PC-3 (cell line): ENCODE measurements at regions of chr7 and their contacts with region 1.

Region 1: DNA sequence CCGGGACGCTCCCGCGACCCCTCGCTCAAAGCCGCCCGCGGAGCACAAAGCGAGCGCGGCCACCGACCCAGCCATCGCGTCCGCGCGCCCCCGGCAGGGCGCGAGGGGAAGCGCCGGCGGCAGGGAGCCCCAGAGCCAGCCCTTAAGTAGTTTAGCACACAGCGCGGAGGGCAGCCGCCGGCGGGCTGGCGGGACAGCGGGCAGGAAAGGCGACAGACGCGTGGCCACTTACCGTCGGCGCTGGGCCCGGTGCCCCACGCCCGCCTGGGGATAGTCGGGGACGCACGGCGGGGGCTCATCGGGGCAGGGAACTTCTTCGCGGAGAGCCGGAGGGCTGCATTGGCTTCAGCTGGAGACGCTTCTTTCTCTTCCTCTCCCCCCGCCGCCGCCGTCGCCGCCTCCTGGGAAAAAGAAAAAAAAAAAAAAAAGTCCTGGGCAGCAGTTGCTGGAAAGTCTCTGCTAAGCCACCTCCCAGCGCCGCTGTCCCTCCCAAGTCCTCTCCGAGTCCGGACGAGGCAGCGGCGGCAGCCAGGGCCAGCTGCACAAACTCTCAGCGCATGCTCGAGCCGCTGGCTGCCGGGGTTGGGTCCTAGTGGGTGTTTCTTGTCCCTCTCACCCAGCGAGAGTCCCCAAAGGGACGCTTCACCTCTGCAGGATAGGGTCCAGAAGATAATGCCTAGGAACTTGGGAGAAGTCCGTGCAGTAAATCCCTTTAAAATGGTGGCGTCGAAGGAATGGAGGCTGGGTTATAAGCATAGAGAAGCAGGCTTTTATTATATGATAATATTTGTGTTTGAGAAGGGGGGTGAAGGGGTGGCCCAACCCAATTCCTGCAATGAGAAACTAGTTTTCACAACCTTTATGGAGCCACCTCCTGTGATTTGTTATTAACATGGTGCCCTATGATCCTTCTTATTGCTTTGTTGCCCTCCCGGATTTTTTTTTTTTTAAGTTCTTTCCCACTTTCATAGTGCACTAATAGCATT is at the start of gene TSPAN12:
- DNase-seq: peak; percentile 70
- ATAC-seq: peak; percentile 85
- H3K4me3 ChIP-seq: peak within 1 kb of the TSS; percentile 88
- H3K27ac ChIP-seq: peak within 1 kb of the TSS; percentile 48
- H3K4me1 ChIP-seq: peaks cover 8% of the 10 kb centered on the region
- H3K27me3 ChIP-seq: no peaks in the 10 kb centered on the region
- CTCF ChIP-seq: peak; percentile 57
- total RNA-seq, gene TSPAN12: 7.2 and 8.3 TPM in 2 replicates

Region 2: DNA sequence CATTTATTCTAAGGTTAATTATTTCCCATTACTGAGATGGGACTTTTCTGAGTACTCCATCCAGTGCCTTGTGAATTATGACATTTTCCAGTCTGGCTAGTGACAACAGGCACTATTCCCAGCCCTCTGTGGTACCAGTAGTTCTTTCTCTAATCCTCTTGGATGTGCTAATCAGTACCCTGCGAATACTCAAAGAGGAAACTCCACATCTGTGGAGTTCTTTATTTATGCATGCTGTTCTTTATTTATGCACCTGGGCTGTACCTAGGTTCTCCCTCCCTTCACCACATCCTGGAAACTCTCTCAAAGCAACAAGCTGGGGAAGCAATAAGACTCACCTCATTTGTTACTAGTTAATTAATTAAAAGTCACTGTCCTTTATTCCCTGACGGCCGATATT is 83.4 kb before region 1 on chr7:
- CTCF ChIA-PET with region 1: no interaction called
- POLR2A ChIA-PET with region 1: no interaction called
- intact Hi-C with region 1: no loop called
- DNase-seq: no peak
- ATAC-seq: no peak
- H3K4me3 ChIP-seq: no peak overlapping the region
- H3K27ac ChIP-seq: no peak overlapping the region
- H3K4me1 ChIP-seq: no peaks in the 10 kb centered on the region
- H3K27me3 ChIP-seq: no peaks in the 10 kb centered on the region
- CTCF ChIP-seq: no peak

Region 3: DNA sequence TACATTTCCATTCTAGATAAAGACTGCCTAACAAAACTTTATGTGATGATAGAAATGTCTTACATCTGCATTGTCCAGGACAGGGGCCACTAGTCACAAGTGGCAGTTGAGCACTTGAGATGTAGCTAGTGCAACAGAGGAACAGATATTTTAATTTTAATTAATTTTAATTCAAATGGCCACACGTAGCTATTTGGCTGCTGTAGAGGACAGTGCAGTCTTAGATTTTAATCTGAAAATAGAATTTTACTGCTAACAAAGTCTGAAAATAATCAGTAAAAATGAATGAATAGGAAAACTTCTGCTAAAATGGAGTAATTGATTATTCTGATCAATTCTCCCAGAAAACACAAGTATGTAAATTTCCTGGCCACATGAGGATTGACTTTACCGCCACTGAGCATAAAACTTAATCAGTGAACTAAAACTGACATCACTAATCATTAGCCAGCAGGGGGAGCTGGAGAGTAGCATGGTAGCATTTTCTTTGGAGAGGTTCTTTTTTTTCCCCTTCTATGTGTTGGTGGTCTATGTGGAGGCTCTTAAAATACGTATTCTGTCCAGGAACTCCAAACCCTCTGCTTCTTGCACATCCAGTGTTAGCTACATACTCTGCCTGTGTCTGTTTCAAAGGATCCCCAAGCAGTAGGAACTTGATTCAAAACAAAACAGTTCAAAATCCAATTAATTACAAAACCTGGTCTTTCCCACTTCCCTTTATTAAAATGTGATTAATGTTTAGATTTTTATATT is 52.1 kb before region 1 on chr7:
- CTCF ChIA-PET with region 1: no interaction called
- POLR2A ChIA-PET with region 1: no interaction called
- intact Hi-C with region 1: loop called (anchors 1 kb)
- DNase-seq: peak; percentile 72
- ATAC-seq: peak; percentile 61
- H3K4me3 ChIP-seq: no peak overlapping the region
- H3K27ac ChIP-seq: no peak overlapping the region
- H3K4me1 ChIP-seq: no peaks in the 10 kb centered on the region
- H3K27me3 ChIP-seq: no peaks in the 10 kb centered on the region
- CTCF ChIP-seq: peak; percentile 83

Region 4: GRCh38 chr7:120833546-120833945 is 24.3 kb before region 1 on chr7:
- CTCF ChIA-PET with region 1: no interaction called
- POLR2A ChIA-PET with region 1: no interaction called
- intact Hi-C with region 1: loop called (anchors 2 kb)
- DNase-seq: peak; percentile 62
- ATAC-seq: peak; percentile 91
- H3K4me3 ChIP-seq: no peak overlapping the region
- H3K27ac ChIP-seq: no peak overlapping the region
- H3K4me1 ChIP-seq: peaks cover 3% of the 10 kb centered on the region; the same call in 1 of the 2 replicates
- H3K27me3 ChIP-seq: no peaks in the 10 kb centered on the region
- CTCF ChIP-seq: no peak

Region 5: DNA sequence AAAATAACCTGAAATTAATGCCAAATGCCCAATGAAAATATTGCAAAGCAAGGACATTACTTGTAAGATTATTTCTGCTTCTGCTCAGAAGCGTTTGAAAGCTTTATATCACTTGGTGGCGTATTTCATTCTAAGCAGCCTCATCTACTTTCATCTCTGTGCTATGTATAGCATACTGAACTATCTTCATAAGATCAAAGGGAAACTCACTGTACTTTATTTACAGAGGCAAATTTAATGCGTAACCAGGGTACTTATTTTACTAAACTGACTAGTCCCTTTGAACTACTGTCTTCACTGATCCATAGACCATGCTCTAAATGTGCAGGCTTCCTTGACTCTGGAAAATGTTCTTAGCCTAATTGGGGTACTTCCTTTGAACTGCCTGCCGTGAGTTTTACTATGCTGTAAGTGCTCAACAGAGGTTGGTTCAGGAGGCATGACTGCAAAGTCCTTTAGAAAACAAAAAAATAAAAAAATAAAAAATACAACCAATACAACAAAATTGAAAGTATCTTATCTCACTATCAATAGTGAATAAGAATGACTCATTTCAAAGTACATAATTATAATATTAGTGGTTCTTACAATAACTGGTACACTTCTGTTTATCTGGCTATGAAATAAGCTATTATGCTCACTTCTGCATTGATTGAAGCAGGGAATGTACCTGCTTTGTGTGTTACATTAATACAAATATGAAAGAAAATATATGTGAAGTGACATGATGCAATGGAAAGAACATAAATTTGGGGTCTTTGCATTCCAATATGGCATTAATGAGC is 41.0 kb after region 1 on chr7:
- CTCF ChIA-PET with region 1: no interaction called
- POLR2A ChIA-PET with region 1: no interaction called
- intact Hi-C with region 1: no loop called
- DNase-seq: no peak
- ATAC-seq: peak; percentile 50
- H3K4me3 ChIP-seq: no peak overlapping the region
- H3K27ac ChIP-seq: no peak overlapping the region
- H3K4me1 ChIP-seq: no peaks in the 10 kb centered on the region; the same call in 1 of the 2 replicates
- H3K27me3 ChIP-seq: no peaks in the 10 kb centered on the region
- CTCF ChIP-seq: no peak

Region 6: DNA sequence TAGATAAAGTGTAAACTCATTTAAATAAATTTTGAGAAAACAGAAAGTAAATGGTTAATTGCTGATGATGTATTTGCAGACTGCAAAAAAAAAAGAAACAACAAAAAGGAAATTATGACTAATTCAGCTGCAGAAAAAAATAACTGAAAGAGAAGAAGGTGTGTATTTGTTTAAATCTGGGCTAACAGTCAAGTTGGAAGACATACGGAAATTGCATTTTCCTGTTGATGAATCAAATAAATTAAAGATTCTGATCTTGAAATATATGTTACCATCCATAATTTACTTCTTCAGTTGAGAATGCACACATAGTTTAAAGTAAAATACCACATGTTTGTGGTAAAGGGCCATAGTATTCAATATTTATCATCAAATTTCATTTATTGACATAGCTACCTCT is 73.4 kb after region 1 on chr7:
- CTCF ChIA-PET with region 1: no interaction called
- POLR2A ChIA-PET with region 1: interaction called, 22 read pairs
- intact Hi-C with region 1: loop called (anchors 1 kb)
- DNase-seq: peak; percentile 63
- ATAC-seq: peak; percentile 48
- H3K4me3 ChIP-seq: no peak overlapping the region
- H3K27ac ChIP-seq: peak overlapping the region; percentile 6; the same call in 1 of the 2 replicates
- H3K4me1 ChIP-seq: peaks cover 35% of the 10 kb centered on the region
- H3K27me3 ChIP-seq: no peaks in the 10 kb centered on the region
- CTCF ChIP-seq: no peak